ENCODE measurements at regions of chr1 and their contacts with region 1.

Region 1: DNA sequence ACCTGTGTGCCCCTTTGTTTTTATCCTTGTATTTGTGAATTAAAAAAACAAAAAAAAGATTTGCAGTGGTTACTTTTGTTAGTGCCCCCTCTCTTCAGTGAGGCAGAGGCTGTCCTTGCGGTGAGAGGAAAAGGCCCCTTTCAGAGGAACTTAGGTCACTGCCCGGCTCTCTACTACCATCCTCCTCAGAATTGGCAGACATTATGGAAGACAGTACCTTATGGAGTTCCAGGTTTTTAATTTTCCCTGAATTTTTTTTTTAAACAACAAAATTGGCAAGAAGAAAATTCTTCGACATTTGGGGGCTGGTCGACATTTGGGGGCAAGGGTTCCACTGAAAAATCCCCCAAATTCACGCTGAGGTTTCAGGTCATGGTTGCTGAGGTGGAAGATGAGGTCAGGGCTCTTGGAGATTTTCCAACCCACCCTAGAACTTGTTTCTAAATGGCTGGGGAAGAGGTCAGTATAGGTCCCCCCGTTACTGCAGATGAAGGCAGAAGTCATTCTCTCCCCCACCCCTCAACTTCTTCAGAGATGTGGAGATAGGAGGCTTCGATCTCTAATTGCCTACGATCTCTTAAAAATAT is 5.3 kb downstream of the RXFP4 start:
- DNase-seq: no peak
- ATAC-seq: no peak
- H3K4me3 ChIP-seq: no peak overlapping the region
- H3K27ac ChIP-seq: peak overlapping the region; percentile 86
- H3K4me1 ChIP-seq: peaks cover 50% of the 10 kb centered on the region
- H3K27me3 ChIP-seq: no peaks in the 10 kb centered on the region
- CTCF ChIP-seq: no peak
- EP300 ChIP-seq: no peak
- POLR2A ChIP-seq: no peak
- RAD21 ChIP-seq: no peak

Region 2: DNA sequence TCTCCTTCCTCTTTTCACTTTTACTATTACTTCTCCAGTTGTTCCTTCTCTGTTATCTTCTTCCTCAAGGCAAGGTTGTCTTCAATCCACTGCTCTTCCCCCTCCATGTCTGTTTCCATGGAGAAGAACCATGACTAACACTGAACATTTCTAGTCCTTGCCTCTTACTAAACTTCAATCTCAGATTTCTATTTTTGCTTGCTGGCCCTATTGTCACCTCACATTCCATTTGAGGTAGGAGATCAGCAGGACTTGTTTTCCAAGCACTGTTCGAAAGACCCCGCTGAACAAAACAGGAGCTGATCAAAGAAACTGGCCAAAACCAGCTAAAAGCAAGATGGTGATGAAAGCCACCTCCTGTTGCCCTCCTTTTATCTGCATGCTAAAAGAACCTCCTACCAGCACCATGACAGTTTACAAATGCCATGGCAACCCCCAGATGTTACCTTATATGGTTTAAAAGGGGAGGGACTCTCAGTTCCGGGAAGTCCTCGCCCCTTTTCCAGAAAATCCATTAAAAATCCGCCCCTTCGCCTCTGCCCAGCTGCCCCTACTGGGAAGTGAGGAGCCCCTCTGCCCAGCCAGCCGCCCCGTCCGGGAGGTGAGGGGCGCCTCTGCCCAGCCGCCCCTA is 112.3 kb before region 1 on chr1:
- CTCF ChIA-PET with region 1: no interaction called
- POLR2A ChIA-PET with region 1: no interaction called
- in situ Hi-C with region 1: no loop called
- intact Hi-C with region 1: no loop called
- DNase-seq: no peak
- ATAC-seq: no peak
- H3K4me3 ChIP-seq: no peak overlapping the region
- H3K27ac ChIP-seq: peak overlapping the region; percentile 17
- H3K4me1 ChIP-seq: peaks cover 24% of the 10 kb centered on the region
- H3K27me3 ChIP-seq: no peaks in the 10 kb centered on the region
- CTCF ChIP-seq: no peak
- EP300 ChIP-seq: no peak
- POLR2A ChIP-seq: no peak
- RAD21 ChIP-seq: no peak

Region 3: DNA sequence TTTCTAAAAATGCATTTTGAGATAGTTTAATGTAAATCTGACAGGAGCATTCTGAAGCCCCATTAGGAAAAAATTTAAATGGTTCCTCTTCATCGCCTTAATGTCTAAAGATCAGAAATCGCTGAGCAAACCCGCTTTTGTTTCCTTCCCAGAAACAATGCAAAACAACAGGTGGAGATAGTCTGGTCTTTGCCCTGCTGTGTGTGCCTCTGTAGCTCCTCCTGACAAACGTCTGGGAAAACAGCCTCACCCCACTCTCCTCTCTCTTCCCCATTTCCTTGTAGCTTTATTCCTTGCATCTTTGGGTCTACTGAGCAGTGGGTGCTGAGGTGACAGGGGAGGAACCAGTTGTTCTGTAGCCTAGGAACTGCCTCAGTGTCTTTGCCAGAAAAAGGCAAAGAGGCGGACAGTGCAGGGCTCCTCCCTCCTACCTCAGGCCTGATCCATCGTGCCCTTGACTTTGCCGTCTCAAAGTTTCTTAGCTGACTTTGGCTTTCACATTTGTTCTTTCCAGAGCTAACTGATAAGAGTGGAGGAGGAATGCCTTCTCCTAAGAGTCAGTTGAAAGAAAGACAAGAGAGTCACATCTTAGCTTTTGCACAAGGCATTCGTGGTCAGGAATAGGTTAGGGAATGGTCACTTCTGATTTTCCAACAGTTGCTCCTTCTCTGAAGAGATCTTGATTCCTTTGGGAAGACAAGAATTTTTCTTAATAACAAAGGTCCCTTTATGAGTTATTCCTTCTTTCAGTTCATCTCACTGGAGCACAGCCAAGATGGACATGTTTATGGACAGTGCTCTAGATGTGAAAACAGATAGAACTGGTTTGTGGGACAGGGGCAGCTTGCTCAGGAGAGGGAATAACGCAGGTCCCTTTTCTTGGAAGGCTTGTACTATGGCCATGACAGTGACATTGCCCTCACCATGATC is 62.4 kb before region 1 on chr1:
- CTCF ChIA-PET with region 1: no interaction called
- POLR2A ChIA-PET with region 1: no interaction called
- in situ Hi-C with region 1: no loop called
- intact Hi-C with region 1: no loop called
- DNase-seq: no peak
- ATAC-seq: peak; percentile 52
- H3K4me3 ChIP-seq: no peak overlapping the region
- H3K27ac ChIP-seq: no peak overlapping the region
- H3K4me1 ChIP-seq: peaks cover 38% of the 10 kb centered on the region
- H3K27me3 ChIP-seq: peaks cover 0 to 8% of the 10 kb centered on the region in 2 experiments; a peak in 1 of 5 replicates
- CTCF ChIP-seq: no peak
- EP300 ChIP-seq: no peak
- POLR2A ChIP-seq: no peak
- RAD21 ChIP-seq: no peak

Region 4: GRCh38 chr1:155961937-155962336 is 15.2 kb after region 1 on chr1:
- CTCF ChIA-PET with region 1: no interaction called
- POLR2A ChIA-PET with region 1: interaction called, 37 read pairs
- in situ Hi-C with region 1: no loop called
- intact Hi-C with region 1: no loop called
- DNase-seq: no peak
- ATAC-seq: peak; percentile 31; the same call in 2 of the 3 replicates
- H3K4me3 ChIP-seq: no peak overlapping the region
- H3K27ac ChIP-seq: no peak overlapping the region
- H3K4me1 ChIP-seq: peaks cover 12% of the 10 kb centered on the region
- H3K27me3 ChIP-seq: no peaks in the 10 kb centered on the region
- CTCF ChIP-seq: peak; percentile 17; the same call in 1 of the 2 replicates
- EP300 ChIP-seq: no peak
- POLR2A ChIP-seq: no peak
- RAD21 ChIP-seq: no peak

Region 5: GRCh38 chr1:155970531-155971167 is 23.9 kb after region 1 on chr1:
- CTCF ChIA-PET with region 1: no interaction called
- POLR2A ChIA-PET with region 1: interaction called, 390 read pairs
- in situ Hi-C with region 1: no loop called
- intact Hi-C with region 1: loop called (anchors 5 kb)
- DNase-seq: no peak
- ATAC-seq: no peak
- H3K4me3 ChIP-seq: no peak overlapping the region
- H3K27ac ChIP-seq: no peak overlapping the region
- H3K4me1 ChIP-seq: peaks cover 95% of the 10 kb centered on the region
- H3K27me3 ChIP-seq: no peaks in the 10 kb centered on the region
- CTCF ChIP-seq: no peak
- EP300 ChIP-seq: no peak
- POLR2A ChIP-seq: no peak
- RAD21 ChIP-seq: no peak

Region 6: DNA sequence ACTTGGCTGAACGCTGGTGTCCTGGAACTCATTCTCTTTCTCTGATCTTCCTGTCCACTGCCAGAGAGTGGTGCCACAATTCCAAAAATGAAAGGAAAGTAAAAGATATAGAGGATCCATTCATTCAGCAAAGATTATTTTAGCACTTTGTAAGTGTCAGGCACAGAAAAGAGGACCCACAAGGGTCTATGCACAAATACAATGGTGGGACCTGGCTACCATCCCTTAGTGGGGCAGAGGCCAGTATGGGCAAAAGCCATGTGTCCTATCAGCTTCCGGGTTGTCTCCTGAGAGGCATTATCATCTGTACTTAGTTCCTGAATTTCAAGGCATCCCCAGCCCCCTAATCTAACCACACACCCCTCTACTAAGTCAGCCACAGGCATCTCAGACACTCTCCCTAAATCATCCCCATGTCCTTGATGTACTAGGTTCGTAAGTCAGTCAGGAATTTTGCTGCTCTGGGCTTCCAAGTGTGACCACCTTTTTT is 55.0 kb after region 1 on chr1:
- CTCF ChIA-PET with region 1: no interaction called
- POLR2A ChIA-PET with region 1: interaction called, 14 read pairs
- in situ Hi-C with region 1: no loop called
- intact Hi-C with region 1: no loop called
- DNase-seq: no peak
- ATAC-seq: peak; percentile 46
- H3K4me3 ChIP-seq: peak overlapping the region; percentile 40 to 55 (median 45)
- H3K27ac ChIP-seq: peak overlapping the region; percentile 48
- H3K4me1 ChIP-seq: peaks cover 55% of the 10 kb centered on the region
- H3K27me3 ChIP-seq: no peaks in the 10 kb centered on the region
- CTCF ChIP-seq: peak; percentile 45
- EP300 ChIP-seq: no peak
- POLR2A ChIP-seq: no peak
- RAD21 ChIP-seq: no peak